Lower leg skin (tissue), 4 donors: ENCODE measurements at regions of chr1 and their contacts with region 1.

Region 1: DNA sequence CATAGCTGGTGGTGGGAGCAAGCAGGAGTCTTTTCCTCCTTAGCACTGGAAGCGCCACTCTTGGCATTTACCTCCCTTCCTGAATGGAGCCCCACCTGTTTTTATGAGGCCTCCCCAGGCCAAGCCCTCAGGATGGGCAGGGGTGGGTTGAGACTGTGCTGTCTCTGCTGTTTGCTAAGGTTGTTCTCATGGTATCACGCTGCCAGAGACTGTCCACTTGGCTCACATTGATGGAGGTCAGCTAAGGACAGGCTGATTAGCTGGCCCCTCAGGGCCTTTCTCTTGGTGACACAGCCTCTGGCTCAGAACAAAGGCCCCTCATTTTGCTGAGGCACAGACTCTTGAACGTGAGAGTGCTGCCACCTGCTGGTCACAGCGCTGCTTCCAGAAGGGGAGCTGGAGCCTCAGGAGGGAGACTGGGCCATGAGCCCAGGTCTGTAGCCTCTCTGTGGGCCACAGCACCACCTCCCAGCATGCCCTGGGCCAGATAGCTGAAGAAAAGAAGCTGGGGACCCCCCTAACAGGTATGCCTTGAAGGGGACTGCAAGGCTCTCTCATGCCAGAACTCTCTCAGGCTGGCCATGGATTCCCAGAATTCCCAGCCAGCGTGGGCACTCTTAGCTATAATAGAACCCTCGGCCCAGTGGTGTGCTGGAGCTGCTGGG is 85.6 kb downstream of the CD58 start:
- DNase-seq: peak; percentile 80 to 96
- H3K4me3 ChIP-seq: no peak overlapping the region
- CTCF ChIP-seq: peak in 1 of 3 donors; percentile 93
- POLR2A ChIP-seq: no peak

Region 2: DNA sequence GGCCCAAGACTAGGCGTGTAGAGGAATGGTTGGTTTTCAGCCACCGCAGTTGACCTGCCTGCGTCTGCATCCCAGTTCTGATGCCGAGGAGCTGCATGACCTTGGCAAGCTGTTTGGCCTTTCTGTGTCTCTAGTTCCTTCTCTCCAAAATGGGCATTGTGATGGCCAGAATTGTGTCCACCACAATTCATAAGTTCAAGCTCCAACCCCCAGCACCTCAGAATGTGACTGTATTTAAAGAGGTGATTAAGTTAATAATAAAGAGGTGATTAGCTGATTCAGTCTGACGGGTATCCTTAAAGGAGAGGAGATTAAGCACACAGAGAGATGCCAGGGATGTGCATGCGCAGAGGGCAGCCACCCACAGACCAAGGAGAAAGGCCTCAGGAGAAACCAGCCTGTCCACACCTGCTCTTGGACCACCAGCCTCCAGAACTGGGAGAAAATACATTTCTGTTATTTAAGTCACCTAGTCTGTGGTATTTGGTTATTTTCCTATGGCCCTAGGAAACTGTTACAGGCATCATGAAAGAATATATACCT is 345.5 kb before region 1 on chr1:
- intact Hi-C with region 1: loop called (anchors 2 kb)
- DNase-seq: no peak
- H3K4me3 ChIP-seq: no peak overlapping the region
- CTCF ChIP-seq: no peak
- POLR2A ChIP-seq: no peak

Region 3: GRCh38 chr1:116151739-116152576 is 333.2 kb before region 1 on chr1:
- intact Hi-C with region 1: loop called (anchors 5 kb)
- DNase-seq: peak in 1 of 2 donors; percentile 93
- H3K4me3 ChIP-seq: no peak overlapping the region
- CTCF ChIP-seq: peak in 1 of 3 donors; percentile 62
- POLR2A ChIP-seq: no peak